ENCODE measurements at regions of chr15 and their contacts with region 1.

Region 1: DNA sequence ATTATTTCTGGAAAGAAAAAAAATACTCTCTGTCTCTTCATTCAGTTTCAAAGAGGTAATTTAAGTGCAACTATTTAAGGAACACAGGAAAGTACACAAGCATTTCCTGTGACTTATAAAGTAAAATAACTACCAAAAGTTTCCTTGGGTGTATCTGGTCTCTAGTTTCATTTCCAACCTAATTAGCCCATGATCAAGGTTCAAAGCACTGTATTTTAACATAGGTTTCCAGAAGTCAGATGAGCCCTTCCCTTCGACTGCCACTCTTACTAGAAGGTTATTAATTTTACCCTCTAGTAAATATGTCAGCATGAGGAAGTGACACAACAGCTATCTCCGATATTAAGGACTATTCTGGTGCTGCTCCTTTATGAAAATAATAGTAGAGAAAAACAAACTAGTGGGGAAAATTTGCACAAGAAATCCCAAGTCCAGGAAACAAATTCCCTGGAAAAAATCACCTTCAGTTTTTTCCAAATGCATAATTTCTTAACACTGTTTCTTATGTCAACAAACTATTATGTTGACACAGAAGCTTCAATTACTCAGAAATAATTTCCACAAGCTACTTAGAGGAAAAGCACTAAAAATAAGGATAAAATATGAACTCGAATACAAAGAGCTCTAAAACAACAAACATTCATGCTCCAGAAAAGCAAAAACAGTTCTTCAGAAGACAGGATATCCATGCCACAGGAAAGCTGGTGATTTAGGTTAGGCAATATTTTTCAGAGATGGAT is 35.3 kb downstream of the CCPG1 start:
- DNase-seq: peak; percentile 24
- ATAC-seq: peak; percentile 80
- H3K4me3 ChIP-seq: peak overlapping the region; percentile 10; the same call in 1 of the 2 replicates
- H3K27ac ChIP-seq: peak overlapping the region; percentile 50
- H3K4me1 ChIP-seq: peaks cover 7% of the 10 kb centered on the region
- H3K27me3 ChIP-seq: no peaks in the 10 kb centered on the region
- CTCF ChIP-seq: no peak
- EP300 ChIP-seq: no peak
- POLR2A ChIP-seq: no peak
- RAD21 ChIP-seq: no peak

Region 2: DNA sequence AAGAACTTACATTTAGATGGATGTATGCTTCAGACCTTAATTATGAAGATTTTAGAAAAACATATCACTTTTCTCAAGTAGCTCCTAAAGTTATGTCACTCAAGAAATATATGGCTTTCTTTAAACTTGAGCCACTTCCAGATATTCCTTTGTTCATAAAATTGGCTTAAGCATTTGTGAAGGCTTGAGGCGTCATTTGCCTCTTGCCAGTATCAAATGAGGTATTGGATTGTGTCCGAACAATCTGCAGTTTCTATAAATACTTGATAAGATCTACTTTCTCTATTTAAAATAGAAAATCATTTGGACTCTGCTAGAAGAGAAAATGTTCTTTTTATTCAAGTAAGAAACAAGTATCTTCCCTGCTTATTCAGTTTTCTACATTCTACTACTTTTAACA is 278.7 kb before region 1 on chr15:
- CTCF ChIA-PET with region 1: no interaction called
- POLR2A ChIA-PET with region 1: no interaction called
- RAD21 ChIA-PET with region 1: no interaction called
- SMC1A ChIA-PET with region 1: no interaction called
- in situ Hi-C with region 1: no loop called
- intact Hi-C with region 1: no loop called
- DNase-seq: no peak
- ATAC-seq: no peak
- H3K4me3 ChIP-seq: no peak overlapping the region
- H3K27ac ChIP-seq: no peak overlapping the region
- H3K4me1 ChIP-seq: no peaks in the 10 kb centered on the region
- H3K27me3 ChIP-seq: no peaks in the 10 kb centered on the region
- CTCF ChIP-seq: no peak
- EP300 ChIP-seq: no peak
- POLR2A ChIP-seq: no peak
- RAD21 ChIP-seq: no peak

Region 3: DNA sequence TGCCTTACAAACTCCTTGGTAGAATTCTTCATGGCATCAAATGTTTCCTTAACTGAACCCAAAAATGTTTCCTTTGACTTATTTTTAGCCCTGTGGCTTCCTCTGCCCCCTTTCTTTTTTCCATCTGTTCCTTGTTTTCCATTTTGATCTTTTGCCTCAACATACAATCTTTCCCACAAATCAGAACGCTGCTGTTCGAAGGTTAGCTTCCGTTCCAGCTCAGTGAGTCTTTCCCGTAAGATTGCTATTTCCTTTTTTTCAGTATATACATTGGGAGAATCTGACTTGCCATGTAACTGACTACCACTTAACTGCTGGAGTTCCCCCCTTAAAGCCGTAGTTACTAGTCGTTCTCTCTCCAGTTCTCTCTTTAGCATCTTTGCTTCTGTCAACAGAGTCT is 12.6 kb before region 1 on chr15:
- CTCF ChIA-PET with region 1: interaction called, 6 read pairs
- POLR2A ChIA-PET with region 1: interaction called, 4 read pairs
- RAD21 ChIA-PET with region 1: interaction called, 3 read pairs
- SMC1A ChIA-PET with region 1: interaction called, 11 read pairs
- in situ Hi-C with region 1: no loop called
- intact Hi-C with region 1: no loop called
- DNase-seq: no peak
- ATAC-seq: no peak
- H3K4me3 ChIP-seq: no peak overlapping the region
- H3K27ac ChIP-seq: no peak overlapping the region
- H3K4me1 ChIP-seq: no peaks in the 10 kb centered on the region
- H3K27me3 ChIP-seq: no peaks in the 10 kb centered on the region
- CTCF ChIP-seq: no peak
- EP300 ChIP-seq: no peak
- POLR2A ChIP-seq: no peak
- RAD21 ChIP-seq: no peak

Region 4: GRCh38 chr15:55507567-55507966 is 134.7 kb after region 1 on chr15:
- CTCF ChIA-PET with region 1: no interaction called
- POLR2A ChIA-PET with region 1: no interaction called
- RAD21 ChIA-PET with region 1: no interaction called
- SMC1A ChIA-PET with region 1: no interaction called
- in situ Hi-C with region 1: no loop called
- intact Hi-C with region 1: no loop called
- DNase-seq: no peak
- ATAC-seq: no peak
- H3K4me3 ChIP-seq: no peak overlapping the region
- H3K27ac ChIP-seq: no peak overlapping the region
- H3K4me1 ChIP-seq: no peaks in the 10 kb centered on the region
- H3K27me3 ChIP-seq: no peaks in the 10 kb centered on the region
- CTCF ChIP-seq: no peak
- EP300 ChIP-seq: no peak
- POLR2A ChIP-seq: no peak
- RAD21 ChIP-seq: no peak